PC-3 (cell line): ENCODE measurements at regions of chr12 and their contacts with region 1.

Region 1: DNA sequence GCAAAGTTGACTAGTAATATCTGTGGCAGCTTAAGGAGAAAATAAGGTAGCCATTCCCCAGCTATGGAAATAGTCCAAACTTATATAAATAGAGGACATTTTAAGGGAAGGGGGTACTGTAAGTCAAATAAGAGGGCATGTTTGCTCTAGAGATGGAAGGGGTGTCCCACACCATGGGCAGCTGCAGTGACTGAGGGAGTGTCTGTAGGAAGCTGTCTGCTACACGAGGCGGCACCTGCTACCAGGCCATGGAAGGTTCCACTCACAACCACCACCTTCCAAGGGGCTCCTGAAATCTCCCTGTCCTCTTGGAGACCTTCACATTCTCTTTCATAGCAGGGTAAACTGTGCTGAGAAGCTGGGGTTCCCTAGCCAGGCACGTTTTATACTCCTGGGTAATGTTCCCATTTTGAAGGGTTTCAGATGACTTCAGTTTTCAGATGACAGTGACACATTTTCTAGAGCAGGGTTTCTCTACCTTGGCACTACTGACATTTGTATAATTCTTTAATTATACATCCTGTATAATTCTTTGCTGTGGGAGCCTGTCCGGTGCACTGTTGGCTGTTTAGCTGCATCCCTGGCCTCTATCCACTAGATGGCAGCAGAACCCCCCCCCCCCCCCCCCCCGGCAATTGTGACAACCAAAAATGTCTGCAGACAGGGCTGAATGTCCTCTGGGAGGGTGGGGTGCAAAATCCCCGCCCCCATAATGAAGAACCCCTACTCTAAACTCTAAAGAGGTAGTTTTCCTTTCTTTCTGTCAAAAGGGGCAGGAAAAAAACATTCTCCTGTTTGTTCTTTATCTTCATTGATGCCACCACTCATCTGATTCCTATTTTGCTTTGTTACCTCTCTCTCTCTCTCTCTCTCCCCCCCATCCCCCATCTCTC is 11.6 kb upstream of the SMCO2 start:
- DNase-seq: peak; percentile 33
- ATAC-seq: peak; percentile 82
- H3K4me3 ChIP-seq: no peak overlapping the region
- H3K27ac ChIP-seq: no peak overlapping the region
- H3K4me1 ChIP-seq: no peaks in the 10 kb centered on the region
- H3K27me3 ChIP-seq: no peaks in the 10 kb centered on the region
- CTCF ChIP-seq: peak; percentile 72

Region 2: DNA sequence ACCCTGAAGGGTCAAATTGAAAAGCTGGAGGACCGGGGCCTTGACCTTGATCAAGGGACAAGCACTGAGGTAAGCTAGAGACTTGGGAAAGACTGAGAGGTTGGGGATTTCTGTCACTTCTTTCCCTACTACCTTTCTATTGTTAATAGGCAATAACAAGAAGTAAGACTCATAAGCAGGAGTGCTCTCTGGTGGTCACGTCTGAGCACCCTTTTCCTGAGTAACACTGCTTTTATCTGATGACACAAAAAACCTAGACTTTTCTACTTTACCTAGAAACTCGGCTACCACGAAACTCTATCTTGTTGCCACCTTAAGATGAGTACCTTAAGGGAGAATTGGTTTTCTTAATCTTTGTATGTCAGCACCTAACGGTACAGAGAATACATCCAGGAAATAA is 53.6 kb after region 1 on chr12:
- CTCF ChIA-PET with region 1: no interaction called
- POLR2A ChIA-PET with region 1: no interaction called
- intact Hi-C with region 1: loop called (anchors 10 kb)
- DNase-seq: peak; percentile 22
- ATAC-seq: peak; percentile 65; the same call in 1 of the 2 replicates
- H3K4me3 ChIP-seq: no peak overlapping the region
- H3K27ac ChIP-seq: no peak overlapping the region
- H3K4me1 ChIP-seq: peaks cover 3% of the 10 kb centered on the region; the same call in 1 of the 2 replicates
- H3K27me3 ChIP-seq: no peaks in the 10 kb centered on the region
- CTCF ChIP-seq: peak; percentile 46; the same call in 1 of the 2 replicates

Region 3: DNA sequence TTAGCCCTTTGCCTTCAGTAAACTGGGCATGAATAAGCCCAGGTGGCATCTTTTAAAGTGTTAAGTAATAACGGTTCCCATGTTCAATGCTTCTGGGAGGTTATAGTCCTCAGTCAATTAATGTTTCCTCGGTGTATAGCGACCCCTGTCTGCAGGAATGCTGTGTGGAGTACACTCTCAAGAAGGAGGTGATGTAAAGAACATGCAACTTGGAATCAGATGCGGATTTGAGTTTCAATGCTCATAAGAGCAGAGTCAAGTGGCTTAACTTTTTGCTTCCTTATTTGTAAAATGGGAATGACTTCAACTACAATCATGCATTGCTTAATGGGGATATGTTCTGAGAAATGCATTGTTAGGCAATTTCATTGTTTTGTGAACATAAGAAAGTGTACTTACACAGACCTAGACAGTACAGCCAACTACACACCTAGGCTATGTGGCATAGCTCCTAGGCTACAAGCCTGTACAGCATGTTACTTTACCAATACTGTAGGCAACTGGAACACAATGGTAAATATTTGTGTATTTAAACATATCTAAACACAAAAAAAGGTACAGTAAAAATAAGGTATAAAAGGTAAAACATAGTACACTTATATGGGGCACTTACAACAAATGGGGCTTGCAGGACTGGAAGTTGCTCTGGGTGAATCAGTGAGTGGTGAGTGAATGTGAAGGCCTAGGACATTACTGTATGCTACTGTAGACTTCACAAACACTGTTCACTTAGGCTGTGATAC is 269.0 kb after region 1 on chr12:
- CTCF ChIA-PET with region 1: no interaction called
- POLR2A ChIA-PET with region 1: no interaction called
- intact Hi-C with region 1: loop called (anchors 1 kb)
- DNase-seq: peak; percentile 98
- ATAC-seq: peak; percentile 99
- H3K4me3 ChIP-seq: no peak overlapping the region
- H3K27ac ChIP-seq: no peak overlapping the region
- H3K4me1 ChIP-seq: no peaks in the 10 kb centered on the region
- H3K27me3 ChIP-seq: no peaks in the 10 kb centered on the region
- CTCF ChIP-seq: peak; percentile 99; the same call in 1 of the 2 replicates